Activated CD4-positive, alpha-beta T cell treated with anti-CD3 and anti-CD28 coated beads for 36 hours (primary cell): ENCODE measurements at regions of chr17 and their contacts with region 1.

Region 1: GRCh38 chr17:17356149-17356930 is 53.2 kb downstream of the NT5M start:
- DNase-seq: peak; percentile 82
- ATAC-seq: peak; percentile 86
- H3K4me3 Mint-ChIP-seq: no peak overlapping the region
- H3K27ac Mint-ChIP-seq: no peak overlapping the region
- H3K4me1 Mint-ChIP-seq: no peaks in the 10 kb centered on the region
- H3K27me3 Mint-ChIP-seq: peaks cover 2% of the 10 kb centered on the region

Region 2: DNA sequence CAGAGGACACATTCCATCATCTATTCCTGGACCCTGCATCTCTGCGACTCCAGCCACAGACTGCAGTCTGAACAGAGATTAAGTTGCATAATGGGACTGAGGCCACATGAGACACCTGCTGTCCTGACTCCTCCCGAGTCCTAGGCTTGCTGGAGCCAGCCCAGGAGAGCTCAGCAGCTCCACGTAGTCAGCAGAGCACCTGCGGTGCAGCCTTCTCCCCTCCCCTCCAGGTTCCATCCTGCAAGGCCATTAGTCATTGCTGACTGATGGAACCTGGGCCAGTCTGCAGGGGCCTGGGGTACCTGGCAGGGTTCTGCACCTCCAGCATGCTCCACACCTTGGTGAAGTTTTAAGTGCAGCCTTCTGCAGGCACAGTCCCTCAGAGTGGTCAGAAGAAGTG is 226.9 kb before region 1 on chr17:
- CTCF ChIA-PET with region 1: no interaction called
- POLR2A ChIA-PET with region 1: no interaction called
- intact Hi-C with region 1: no loop called
- DNase-seq: no peak
- ATAC-seq: no peak
- H3K4me3 Mint-ChIP-seq: no peak overlapping the region
- H3K27ac Mint-ChIP-seq: no peak overlapping the region
- H3K4me1 Mint-ChIP-seq: peaks cover 26% of the 10 kb centered on the region
- H3K27me3 Mint-ChIP-seq: no peaks in the 10 kb centered on the region

Region 3: DNA sequence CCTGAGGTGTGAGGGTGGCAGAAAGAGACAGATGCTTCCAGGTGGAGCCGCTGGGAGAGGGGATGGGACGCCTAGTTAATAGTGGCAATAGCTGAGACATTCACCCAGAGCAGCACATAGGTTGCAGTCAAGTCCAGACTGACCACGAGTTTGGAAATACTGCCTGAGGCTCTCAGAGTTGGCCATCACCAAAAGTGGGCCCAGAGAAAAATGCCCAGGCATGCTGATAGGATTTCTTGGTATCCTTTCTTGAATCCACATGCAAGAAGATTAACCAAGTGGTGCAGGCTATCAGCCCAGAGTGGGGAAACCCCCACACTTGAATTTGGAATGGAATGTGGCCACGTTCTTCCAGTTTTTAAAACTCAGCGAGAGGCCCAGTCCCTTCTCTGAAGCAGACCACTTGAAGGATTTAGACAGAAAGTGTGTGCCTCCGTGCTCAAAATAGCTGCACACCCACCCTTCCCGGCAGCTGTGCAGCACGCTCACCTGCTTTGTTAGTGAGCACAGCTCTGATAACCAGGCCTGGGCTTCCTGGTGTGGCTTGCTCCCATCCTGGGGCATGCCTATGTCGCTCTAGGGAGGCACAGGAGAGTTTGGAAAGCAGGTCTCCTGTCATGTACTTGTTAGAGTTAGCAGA is 185.9 kb before region 1 on chr17:
- CTCF ChIA-PET with region 1: no interaction called
- POLR2A ChIA-PET with region 1: no interaction called
- intact Hi-C with region 1: no loop called
- DNase-seq: no peak
- ATAC-seq: no peak
- H3K4me3 Mint-ChIP-seq: no peak overlapping the region
- H3K27ac Mint-ChIP-seq: no peak overlapping the region
- H3K4me1 Mint-ChIP-seq: peaks cover 48% of the 10 kb centered on the region
- H3K27me3 Mint-ChIP-seq: no peaks in the 10 kb centered on the region

Region 4: DNA sequence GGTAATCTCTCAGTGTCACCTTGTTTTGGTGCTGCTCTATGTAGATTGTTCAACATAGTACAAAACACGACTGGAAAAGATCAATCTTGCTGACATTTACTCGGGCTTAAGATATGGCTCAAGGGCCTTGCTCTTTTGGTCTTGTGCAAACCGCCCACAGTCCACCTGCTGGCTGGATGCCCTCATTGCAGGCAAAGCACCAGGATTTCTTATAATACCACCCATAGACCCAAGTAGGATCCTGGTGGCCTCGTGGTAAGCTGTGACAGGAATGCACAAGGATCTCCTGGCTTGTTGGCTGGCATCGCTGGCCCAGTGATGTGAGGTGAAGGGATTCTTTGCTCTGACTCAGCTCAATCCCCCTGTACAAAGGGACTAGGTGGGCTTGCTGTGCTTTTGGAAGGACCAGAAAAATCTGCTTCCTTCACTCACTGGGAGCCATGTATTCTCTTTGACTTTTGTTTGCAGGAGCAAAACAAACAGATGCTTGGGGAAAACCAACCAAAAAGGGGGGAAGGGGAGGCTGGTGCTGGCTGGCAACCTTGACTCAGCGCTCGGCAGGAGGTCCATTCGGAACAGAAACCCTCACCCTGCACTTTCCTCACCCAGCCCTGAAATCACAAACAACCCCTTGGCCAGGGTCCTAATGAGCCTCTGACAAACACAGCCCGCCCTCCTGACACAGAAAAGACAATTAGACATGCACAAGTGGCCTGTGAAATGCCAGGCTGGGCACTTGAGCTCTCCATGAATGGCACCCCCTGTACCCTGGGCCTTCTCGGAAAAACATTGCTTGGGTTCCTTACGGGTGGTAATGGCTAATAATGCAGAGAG is 83.9 kb after region 1 on chr17:
- CTCF ChIA-PET with region 1: interaction called, 8 read pairs
- POLR2A ChIA-PET with region 1: no interaction called
- intact Hi-C with region 1: loop called (anchors 1 kb)
- DNase-seq: peak; percentile 86
- ATAC-seq: peak; percentile 84
- H3K4me3 Mint-ChIP-seq: no peak overlapping the region
- H3K27ac Mint-ChIP-seq: no peak overlapping the region
- H3K4me1 Mint-ChIP-seq: peaks cover 2% of the 10 kb centered on the region
- H3K27me3 Mint-ChIP-seq: no peaks in the 10 kb centered on the region

Region 5: GRCh38 chr17:17568749-17569195 is 212.4 kb after region 1 on chr17:
- CTCF ChIA-PET with region 1: interaction called, 10 read pairs
- POLR2A ChIA-PET with region 1: no interaction called
- intact Hi-C with region 1: loop called (anchors 1 to 5 kb)
- DNase-seq: peak; percentile 84
- ATAC-seq: peak; percentile 71
- H3K4me3 Mint-ChIP-seq: no peak overlapping the region
- H3K27ac Mint-ChIP-seq: no peak overlapping the region
- H3K4me1 Mint-ChIP-seq: no peaks in the 10 kb centered on the region
- H3K27me3 Mint-ChIP-seq: no peaks in the 10 kb centered on the region

Region 6: DNA sequence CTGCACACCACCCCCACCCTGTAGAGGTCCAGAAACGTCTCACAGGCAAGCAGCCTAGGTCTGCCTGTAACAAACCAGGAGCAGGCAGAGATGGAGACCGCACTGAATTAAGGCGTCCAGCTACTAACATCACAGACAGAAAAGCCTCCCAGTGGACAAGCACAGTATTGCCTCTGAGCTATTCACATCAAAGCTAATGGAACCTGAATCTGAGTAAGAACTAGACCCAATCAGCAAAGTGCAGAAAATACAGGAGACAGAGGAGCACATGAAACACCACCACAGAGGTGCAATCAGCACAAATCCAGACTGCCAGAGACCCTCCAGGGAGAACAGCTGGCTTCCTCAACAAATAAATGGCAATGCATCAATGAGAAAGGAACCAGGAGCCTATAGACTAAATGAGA is 257.4 kb after region 1 on chr17:
- CTCF ChIA-PET with region 1: no interaction called
- POLR2A ChIA-PET with region 1: no interaction called
- intact Hi-C with region 1: loop called in 1 of 2 experiments (anchors 1 kb)
- DNase-seq: peak; percentile 72
- ATAC-seq: peak; percentile 97
- H3K4me3 Mint-ChIP-seq: no peak overlapping the region
- H3K27ac Mint-ChIP-seq: no peak overlapping the region
- H3K4me1 Mint-ChIP-seq: peaks cover 2% of the 10 kb centered on the region
- H3K27me3 Mint-ChIP-seq: no peaks in the 10 kb centered on the region

Region 7: DNA sequence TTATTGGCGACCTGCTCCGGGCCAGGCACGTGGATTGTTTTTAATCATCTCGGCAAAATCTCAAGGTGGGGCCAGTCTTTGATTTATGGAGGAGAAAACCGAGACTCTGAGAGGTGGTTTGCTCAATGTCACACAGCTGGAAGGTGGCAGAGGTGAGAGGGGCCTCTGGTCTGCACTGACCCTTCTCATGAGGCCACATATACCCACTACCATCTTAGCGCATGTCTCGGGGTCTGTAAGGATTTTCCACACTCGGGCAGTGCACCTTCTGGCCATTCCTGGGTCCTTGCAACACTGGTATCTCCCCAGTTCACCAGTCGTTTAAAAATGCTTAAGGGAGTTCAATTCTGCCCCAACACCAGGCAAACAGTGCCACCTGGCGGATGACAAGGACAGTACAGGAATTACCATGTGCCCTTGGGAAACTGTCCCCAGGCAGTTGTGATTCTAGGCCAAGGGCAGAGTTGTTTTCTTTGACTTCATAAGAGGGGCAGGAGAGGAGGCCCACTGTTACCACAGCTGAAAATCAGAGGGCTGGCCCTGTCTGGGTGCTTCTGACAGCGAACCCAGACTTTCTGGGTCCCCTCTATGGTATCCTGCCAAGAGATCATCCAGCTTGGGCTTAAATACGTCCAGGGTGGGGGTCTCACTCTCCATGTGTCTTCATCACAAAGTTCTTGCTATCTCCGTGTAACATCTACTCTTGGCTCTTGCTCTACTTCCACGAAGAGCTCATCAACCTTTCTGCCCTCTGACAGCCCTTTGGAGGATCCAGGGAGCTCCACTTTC is 285.5 kb after region 1 on chr17:
- CTCF ChIA-PET with region 1: interaction called, 58 read pairs
- POLR2A ChIA-PET with region 1: no interaction called
- intact Hi-C with region 1: loop called (anchors 1 kb)
- DNase-seq: peak; percentile 90
- ATAC-seq: peak; percentile 96
- H3K4me3 Mint-ChIP-seq: no peak overlapping the region
- H3K27ac Mint-ChIP-seq: no peak overlapping the region
- H3K4me1 Mint-ChIP-seq: no peaks in the 10 kb centered on the region
- H3K27me3 Mint-ChIP-seq: no peaks in the 10 kb centered on the region

Region 8: DNA sequence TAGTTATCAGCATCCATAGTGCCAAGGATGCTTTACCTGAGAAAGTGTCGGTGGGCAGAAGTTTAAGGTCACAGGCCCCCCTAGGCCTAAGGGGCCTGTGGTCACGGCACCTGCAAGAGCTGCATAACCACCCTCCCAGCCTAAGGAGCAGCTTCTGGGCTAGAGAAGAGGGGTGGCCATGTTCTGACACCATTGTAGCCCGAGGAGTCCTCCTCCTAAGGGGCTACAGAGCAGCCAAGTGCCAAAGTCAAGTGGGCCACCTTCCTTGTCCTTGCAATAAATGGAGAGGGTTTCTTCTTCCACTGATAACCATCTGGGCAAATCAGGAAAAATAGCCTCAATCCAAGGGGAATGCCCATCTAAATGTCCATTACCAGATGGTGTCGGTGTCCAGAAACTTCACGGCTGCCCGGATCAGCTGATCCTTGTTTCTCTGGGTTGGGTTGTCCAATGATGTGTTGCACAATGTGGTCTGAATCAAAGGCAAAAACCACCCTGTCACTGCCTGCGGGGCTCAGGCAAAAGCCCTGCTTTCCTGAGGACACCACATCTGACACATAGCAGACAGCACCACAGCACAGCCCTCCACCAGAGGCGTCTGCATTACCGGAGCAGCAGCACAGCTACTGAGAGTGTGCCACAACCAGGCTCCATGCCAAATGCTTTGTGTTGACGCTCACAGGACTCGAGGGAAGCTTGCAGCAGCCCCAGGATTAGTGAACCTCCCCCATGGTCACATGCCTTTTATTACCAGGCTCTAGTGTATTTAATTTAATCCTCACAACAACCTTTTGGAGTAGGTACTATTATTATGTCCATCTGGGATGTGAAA is 669.8 kb after region 1 on chr17:
- CTCF ChIA-PET with region 1: no interaction called
- POLR2A ChIA-PET with region 1: no interaction called
- intact Hi-C with region 1: loop called in 1 of 2 experiments (anchors 10 kb)
- DNase-seq: peak; percentile 40
- ATAC-seq: peak; percentile 39
- H3K4me3 Mint-ChIP-seq: no peak overlapping the region
- H3K27ac Mint-ChIP-seq: peak overlapping the region; percentile 23
- H3K4me1 Mint-ChIP-seq: peaks cover 13% of the 10 kb centered on the region
- H3K27me3 Mint-ChIP-seq: no peaks in the 10 kb centered on the region